Motor neuron (in vitro differentiated cells): ENCODE measurements at regions of chr11 and their contacts with region 1.

Region 1: GRCh38 chr11:71448257-71449171 is at the start of gene DHCR7:
- ATAC-seq: peak; percentile 77 to 87 (median 84)
- H3K4me3 ChIP-seq: peak within 1 kb of the TSS; percentile 68 to 88 (median 84)
- H3K27ac ChIP-seq: peak within 1 kb of the TSS; percentile 71 to 74
- H3K4me1 ChIP-seq: peaks cover 14 to 26% of the 10 kb centered on the region in 2 donors
- total RNA-seq, gene DHCR7: 15.3 to 155 (median 49.6) TPM

Region 2: DNA sequence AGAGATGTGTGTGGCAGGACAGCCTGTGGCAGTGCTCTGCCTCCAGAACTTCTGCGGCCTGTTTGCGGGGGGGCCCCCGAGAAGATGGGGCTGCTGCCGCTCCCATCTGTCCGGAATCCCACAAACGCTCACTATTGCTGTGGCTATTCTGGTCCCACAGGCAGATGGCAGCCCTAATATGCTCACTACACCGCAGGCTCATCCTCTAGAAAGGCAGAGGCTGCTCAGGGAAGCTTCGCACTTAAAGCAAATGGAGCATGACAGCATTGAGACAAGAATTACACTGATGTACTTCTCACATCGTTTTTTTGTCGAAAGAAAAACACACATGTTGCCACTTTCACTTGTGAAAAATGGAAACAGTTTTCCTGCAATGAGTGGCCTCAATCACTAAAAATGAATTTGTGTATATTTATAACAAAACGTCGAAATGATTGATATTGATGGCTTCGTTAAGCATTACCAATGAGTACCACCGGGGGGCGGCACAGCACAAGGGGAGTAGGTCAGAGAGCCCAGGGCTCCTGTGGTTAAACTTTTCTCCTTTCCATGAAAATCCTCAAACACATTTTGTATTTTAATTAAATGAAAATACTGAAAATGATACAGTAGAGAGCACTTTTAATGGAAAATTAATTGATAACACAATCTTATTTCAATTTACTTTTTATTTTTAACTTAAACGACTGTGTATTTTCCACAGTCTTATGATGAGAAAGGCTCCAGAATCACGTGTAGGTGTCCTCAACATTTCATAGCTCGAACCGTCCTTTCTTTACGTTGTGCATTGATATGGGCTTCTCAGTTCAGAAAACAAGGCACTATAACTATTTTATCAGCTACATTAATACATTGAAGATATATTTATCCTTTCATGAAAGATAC is 981.1 kb before region 1 on chr11:
- in situ Hi-C with region 1: loop called in 1 of 9 experiments (anchors 25 kb)
- ATAC-seq: peak; percentile 42 to 77 (median 69)
- H3K4me3 ChIP-seq: no peak overlapping the region
- H3K27ac ChIP-seq: no peak overlapping the region
- H3K4me1 ChIP-seq: peaks cover 12 to 14% of the 10 kb centered on the region in 2 donors

Region 3: DNA sequence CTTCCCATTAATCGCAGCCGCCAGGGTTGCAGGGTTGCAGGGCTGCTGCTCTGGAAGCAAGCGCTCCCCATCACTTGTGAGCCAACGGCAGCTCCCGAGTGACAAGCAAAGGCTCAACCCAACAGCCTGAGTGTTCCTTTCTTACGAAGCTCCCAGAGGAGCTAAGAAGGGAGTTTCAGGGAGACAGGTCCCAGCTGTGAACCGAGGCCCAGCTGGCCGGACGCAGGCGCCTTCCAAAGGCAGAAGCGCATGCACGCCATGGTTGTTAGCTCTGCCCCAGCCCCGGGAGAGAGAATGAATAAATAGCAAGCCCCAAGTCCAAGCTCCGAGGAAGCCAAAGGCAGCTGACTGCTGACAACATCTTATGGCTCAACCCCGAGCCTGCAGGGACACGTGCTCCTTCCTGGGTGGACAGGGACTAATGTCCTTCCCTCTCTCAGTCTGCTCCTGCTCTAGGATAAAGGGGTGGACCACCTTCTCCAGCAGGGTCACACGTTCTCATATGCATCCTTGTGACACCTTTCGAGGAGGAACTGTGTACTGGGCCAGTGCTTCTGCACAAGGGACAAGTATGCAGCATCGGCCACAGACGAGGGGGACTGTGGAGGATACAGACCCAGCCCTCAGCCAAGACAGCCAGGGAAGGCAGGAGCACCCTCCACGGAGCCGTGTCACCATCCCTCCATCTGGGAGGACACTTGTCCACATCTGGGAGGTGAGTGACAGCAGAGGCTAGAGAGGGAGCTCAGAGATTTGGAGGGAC is 226.0 kb before region 1 on chr11:
- in situ Hi-C with region 1: no loop called
- ATAC-seq: peak in 1 of 8 experiments; percentile 20
- H3K4me3 ChIP-seq: no peak overlapping the region
- H3K27ac ChIP-seq: no peak overlapping the region
- H3K4me1 ChIP-seq: no peaks in the 10 kb centered on the region